ENCODE measurements at regions of chr18 and their contacts with region 1.

Region 1: DNA sequence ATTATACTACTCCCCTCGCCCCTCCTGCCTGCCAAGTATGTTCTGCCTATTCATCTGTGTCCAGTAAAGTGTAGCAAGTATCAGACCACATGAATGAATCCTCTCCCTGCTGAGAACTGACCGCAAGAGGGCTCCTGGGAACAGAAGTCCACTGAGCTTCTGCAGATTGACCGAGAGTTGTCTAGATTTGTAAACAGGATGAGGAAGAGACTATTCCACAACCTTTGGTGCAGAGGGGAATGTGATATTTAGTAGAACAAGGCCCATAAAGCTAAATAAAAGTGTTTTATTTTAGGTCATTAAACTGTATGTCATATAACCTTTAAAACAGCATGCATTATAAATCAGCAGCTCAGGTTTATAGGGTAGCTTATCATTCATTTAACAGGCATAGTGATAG is 377.0 kb downstream of the DCC start:
- DNase-seq: peak in 7 of 10 donors; percentile 15 to 85 (median 46)

Region 2: DNA sequence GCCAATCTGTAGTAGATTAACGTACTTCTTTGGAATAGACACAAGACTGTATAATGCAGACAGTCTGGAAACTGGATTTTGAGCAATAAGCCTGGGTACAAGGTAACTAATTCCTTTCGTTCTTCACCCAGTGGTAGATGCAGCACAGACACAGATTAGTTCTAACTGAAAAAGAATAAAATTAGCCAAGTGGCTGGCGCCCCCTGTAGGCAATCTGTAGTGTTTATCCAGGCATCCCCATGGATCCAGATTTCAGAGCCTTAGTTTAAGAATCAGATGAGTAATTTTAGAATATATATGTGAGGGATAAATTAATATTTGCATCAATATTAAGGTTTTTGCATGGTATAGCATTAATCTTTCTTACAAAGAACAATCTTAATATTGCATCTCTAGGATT is 186.9 kb after region 1 on chr18:
- intact Hi-C with region 1: loop called (anchors 5 kb)
- DNase-seq: peak in 7 of 10 donors; percentile 50 to 85 (median 64)

Region 3: GRCh38 chr18:53380063-53380639 is 663.2 kb after region 1 on chr18:
- intact Hi-C with region 1: loop called (anchors 5 kb)
- DNase-seq: peak in 1 of 10 donors; percentile 10

Measured in posterior cingulate gyrus (tissue), 11 donors.